PC-3 (cell line): ENCODE measurements at regions of chr19 and their contacts with region 1.

Region 1: GRCh38 chr19:10870955-10871603 is at the start of gene CARM1:
- DNase-seq: peak; percentile 99
- ATAC-seq: peak; percentile 88
- H3K4me3 ChIP-seq: peak within 1 kb of the TSS; percentile 84
- H3K27ac ChIP-seq: peak within 1 kb of the TSS; percentile 31
- H3K4me1 ChIP-seq: peaks cover 4% of the 10 kb centered on the region; the same call in 1 of the 2 replicates
- H3K27me3 ChIP-seq: no peaks in the 10 kb centered on the region
- CTCF ChIP-seq: peak; percentile 49
- total RNA-seq, gene CARM1: 56.2 and 57.1 TPM in 2 replicates

Region 2: DNA sequence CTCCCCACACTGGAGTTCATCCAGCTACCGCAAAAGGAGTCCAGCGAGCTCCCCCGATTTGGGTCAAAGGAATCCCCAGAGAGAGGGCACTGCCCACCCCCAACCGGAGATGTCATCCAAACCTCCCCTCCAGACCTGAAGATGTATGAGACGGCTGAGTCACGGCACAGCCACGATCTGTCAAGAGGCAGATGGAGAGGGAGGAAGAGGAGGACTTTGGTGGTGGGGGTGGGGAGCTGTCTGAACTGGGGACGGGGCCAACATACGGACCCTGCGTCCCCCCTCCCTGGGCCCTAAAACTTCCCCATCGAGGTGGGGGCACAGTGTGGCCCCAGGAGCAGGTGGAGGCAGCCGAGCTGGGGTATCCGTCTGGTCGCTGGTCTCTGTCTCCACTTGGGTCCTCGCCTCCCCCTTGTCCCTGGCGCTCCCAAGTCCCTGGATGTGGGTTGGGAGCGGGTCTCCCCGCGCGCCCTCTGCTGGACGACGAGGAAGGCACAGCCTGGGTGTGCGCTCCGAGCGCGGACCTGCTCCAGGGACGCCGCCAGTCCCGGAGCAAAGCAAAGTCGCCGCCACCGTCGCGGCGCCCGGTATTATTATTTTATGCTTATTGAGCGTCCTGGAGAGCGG is 447.0 kb before region 1 on chr19:
- CTCF ChIA-PET with region 1: interaction called, 10 read pairs
- POLR2A ChIA-PET with region 1: no interaction called
- intact Hi-C with region 1: no loop called
- DNase-seq: peak; percentile 93
- ATAC-seq: peak; percentile 91
- H3K4me3 ChIP-seq: peak overlapping the region; percentile 71
- H3K27ac ChIP-seq: no peak overlapping the region
- H3K4me1 ChIP-seq: peaks cover 24% of the 10 kb centered on the region
- H3K27me3 ChIP-seq: peaks cover 31% of the 10 kb centered on the region
- CTCF ChIP-seq: peak; percentile 94

Region 3: GRCh38 chr19:10835754-10836477 is 35.2 kb before region 1 on chr19 and contains the start of gene TMED1:
- CTCF ChIA-PET with region 1: interaction called, 25 read pairs
- POLR2A ChIA-PET with region 1: interaction called, 3 read pairs
- intact Hi-C with region 1: loop called (anchors 1 kb)
- DNase-seq: peak; percentile 100
- ATAC-seq: peak; percentile 88
- H3K4me3 ChIP-seq: peak within 1 kb of the TSS; percentile 69
- H3K27ac ChIP-seq: peak within 1 kb of the TSS; percentile 81
- H3K4me1 ChIP-seq: peaks cover 16% of the 10 kb centered on the region
- H3K27me3 ChIP-seq: no peaks in the 10 kb centered on the region
- CTCF ChIP-seq: peak; percentile 33; the same call in 1 of the 2 replicates
- total RNA-seq, gene TMED1: 81.2 and 94.6 TPM in 2 replicates

Region 4: DNA sequence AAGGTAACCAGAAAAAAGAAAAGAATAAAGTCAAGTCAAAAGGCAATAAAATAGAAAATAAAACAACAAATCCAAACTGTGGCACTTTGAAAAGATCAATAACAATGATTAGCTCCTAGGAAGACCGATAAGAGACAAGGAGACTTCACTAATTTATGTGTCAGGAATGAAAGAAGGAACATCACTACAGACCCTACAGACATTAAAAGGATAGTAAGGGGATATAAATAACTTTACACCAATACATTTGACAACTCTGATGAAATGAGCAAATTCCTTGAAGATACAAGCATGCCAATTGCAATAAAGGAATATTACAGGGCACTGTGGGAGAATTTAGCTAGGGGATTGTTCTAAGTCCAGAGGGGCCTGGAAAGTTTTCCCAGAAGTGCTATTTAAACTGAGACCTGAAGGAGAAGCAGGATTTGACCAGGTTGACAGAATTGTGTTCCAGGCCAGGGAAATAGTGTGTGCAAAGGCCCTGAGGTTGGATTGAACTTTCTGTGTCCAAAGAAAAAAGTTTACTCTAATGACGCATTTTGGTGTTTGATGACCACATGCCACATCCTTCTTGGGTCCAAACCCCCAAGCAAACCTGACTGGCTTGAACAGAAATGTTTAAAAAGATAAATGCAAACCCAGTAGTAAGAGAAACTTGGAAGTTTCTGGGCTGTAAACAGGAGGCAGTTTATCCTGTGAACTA is 24.4 kb before region 1 on chr19:
- CTCF ChIA-PET with region 1: no interaction called
- POLR2A ChIA-PET with region 1: interaction called, 10 read pairs
- intact Hi-C with region 1: no loop called
- DNase-seq: no peak
- ATAC-seq: no peak
- H3K4me3 ChIP-seq: no peak overlapping the region
- H3K27ac ChIP-seq: no peak overlapping the region
- H3K4me1 ChIP-seq: no peaks in the 10 kb centered on the region
- H3K27me3 ChIP-seq: no peaks in the 10 kb centered on the region
- CTCF ChIP-seq: no peak

Region 5: GRCh38 chr19:10899151-10899653 is 28.1 kb after region 1 on chr19:
- CTCF ChIA-PET with region 1: interaction called, 16 read pairs
- POLR2A ChIA-PET with region 1: no interaction called
- intact Hi-C with region 1: loop called (anchors 2 kb)
- DNase-seq: peak; percentile 95
- ATAC-seq: peak; percentile 75
- H3K4me3 ChIP-seq: peak overlapping the region; percentile 35; the same call in 1 of the 2 replicates
- H3K27ac ChIP-seq: peak overlapping the region; percentile 73
- H3K4me1 ChIP-seq: peaks cover 36% of the 10 kb centered on the region
- H3K27me3 ChIP-seq: no peaks in the 10 kb centered on the region
- CTCF ChIP-seq: no peak

Region 6: DNA sequence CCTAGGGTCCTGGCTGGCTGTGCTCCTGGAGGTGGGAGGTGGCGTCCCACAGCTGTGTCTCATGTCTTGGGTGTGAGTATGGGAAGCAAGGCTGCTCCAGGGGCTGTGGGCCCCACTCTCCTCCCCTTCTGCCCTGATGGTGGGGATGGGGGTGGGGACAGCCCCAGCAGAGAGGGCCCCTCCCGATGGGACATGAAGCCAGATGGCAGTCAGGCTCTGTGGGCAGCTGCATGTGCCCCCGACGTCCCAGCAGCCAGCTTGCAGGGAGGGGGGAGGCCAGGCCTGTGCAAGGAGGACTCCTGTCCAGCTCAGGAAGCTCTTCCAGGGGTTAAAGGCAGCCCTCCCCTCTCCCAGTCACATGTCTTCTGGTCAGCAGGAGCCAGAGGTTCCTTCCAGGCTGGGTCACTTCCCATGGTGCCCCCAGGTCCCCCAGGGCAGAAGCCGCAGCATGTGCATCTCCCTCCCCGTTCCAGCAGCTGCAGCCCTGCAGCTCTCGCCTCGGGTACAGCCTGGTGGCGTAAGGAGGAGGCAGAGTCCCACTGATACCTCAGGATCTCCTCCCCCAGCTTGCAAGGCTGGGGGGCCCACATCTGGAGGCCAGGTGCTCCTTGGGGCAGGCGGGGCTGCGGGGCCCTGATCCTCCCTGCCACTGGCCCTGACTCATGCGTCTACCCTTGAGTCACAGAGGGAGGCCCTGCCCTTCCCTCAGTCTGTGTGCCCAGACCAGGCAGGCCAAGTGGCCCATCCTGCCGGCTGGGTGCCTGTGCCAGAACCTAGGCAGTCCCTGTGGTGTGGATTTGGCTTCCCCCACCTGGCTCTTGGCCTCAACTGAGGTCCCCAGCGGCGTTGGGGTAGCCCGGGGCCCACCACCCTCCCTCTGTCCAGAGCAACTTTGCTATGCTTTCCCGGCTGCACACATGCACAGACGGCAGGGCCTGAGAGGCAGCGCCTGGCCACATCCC is 44.3 kb after region 1 on chr19:
- CTCF ChIA-PET with region 1: interaction called, 12 read pairs
- POLR2A ChIA-PET with region 1: no interaction called
- intact Hi-C with region 1: loop called (anchors 5 kb)
- DNase-seq: peak; percentile 88
- ATAC-seq: peak; percentile 98
- H3K4me3 ChIP-seq: no peak overlapping the region
- H3K27ac ChIP-seq: peak overlapping the region; percentile 47
- H3K4me1 ChIP-seq: peaks cover 15% of the 10 kb centered on the region
- H3K27me3 ChIP-seq: no peaks in the 10 kb centered on the region
- CTCF ChIP-seq: no peak

Region 7: DNA sequence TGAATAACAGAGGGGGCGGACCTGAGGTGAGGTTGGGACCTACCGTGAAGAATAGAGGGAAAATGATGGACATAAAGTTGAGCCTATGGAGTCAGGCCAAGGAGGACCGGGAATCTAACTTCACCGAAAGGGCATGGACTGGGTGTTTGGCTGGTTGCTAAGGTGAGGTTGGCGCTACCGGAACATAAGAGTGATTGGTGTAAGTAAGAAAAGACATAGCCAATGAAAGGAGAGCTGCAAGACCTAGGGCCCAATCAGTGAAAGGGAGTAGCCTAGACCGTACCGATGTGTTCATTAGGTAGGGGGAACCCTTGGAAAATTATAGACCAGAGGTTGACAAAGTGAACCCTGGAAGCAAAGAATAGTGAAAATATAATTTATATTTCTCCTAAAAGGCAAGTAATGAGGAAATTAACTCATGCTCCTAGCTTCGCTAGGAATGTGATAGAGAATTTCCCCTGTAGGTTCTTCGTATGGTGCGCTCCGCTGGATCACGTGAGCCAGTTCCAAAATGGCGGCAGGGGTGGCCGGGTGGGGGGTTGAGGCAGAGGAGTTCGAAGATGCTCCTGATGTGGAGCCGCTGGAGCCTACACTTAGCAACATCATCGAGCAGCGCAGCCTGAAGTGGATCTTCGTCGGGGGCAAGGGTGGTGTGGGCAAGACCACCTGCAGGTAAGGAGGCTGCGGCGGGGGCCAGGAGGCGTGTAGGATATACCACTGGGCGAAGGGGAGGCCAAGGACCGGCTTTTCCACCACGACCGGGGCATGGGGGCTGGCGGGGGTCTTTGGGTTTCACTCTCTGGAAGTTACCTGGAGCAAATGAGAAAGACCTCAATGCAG is 1866.1 kb after region 1 on chr19 and contains the start of gene GET3:
- CTCF ChIA-PET with region 1: no interaction called
- POLR2A ChIA-PET with region 1: interaction called, 19 read pairs
- intact Hi-C with region 1: no loop called
- DNase-seq: peak; percentile 100
- ATAC-seq: peak; percentile 88
- H3K4me3 ChIP-seq: peak within 1 kb of the TSS; percentile 89
- H3K27ac ChIP-seq: peak within 1 kb of the TSS; percentile 84
- H3K4me1 ChIP-seq: peaks cover 28% of the 10 kb centered on the region
- H3K27me3 ChIP-seq: no peaks in the 10 kb centered on the region
- CTCF ChIP-seq: no peak
- total RNA-seq, gene GET3: 251 and 264 TPM in 2 replicates